Vagina (tissue), 2 donors: ENCODE measurements at regions of chr12 and their contacts with region 1.

Region 1: DNA sequence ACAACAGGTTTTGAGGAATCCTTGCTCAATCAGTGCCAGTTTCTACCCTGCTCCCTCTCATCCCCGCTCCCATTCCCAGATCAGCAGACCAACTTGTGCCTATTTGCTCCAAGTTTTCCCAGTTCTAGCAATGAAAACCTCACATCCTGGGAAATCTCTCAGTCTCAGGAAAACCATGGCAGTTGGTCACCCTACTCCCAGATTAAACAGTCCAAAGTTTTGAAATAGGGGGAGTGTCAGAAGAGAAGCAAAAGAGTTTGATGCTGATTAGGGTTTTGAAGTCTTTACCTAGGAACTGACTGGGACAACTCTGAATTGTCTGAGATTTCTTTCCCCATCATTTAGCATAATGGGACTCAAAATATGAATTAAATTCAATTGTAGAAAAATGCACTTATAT is 95.8 kb upstream of the ARID2 start:
- DNase-seq: no peak
- H3K4me3 ChIP-seq: no peak overlapping the region
- H3K27ac ChIP-seq: no peak overlapping the region
- H3K4me1 ChIP-seq: no peaks in the 10 kb centered on the region
- H3K27me3 ChIP-seq: no peaks in the 10 kb centered on the region
- CTCF ChIP-seq: no peak
- POLR2A ChIP-seq: no peak

Region 2: GRCh38 chr12:45601888-45602287 is 31.8 kb before region 1 on chr12:
- intact Hi-C with region 1: loop called (anchors 2 kb)
- DNase-seq: no peak
- H3K4me3 ChIP-seq: no peak overlapping the region
- H3K27ac ChIP-seq: no peak overlapping the region
- H3K4me1 ChIP-seq: no peaks in the 10 kb centered on the region
- H3K27me3 ChIP-seq: no peaks in the 10 kb centered on the region
- CTCF ChIP-seq: no peak
- POLR2A ChIP-seq: no peak